CD4-positive, alpha-beta memory T cell (primary cell): ENCODE measurements at regions of chr3 and their contacts with region 1.

Region 1: GRCh38 chr3:138834359-138835212 is at the start of gene PIK3CB:
- DNase-seq: peak; percentile 81 to 89 (median 88)
- H3K4me3 ChIP-seq: peak within 1 kb of the TSS; percentile 64 to 76
- H3K4me3 Mint-ChIP-seq: peak within 1 kb of the TSS; percentile 90 to 98 (median 95)
- H3K27ac ChIP-seq: peak within 1 kb of the TSS; percentile 76
- H3K27ac Mint-ChIP-seq: peak within 1 kb of the TSS; percentile 96 to 99 (median 97)
- H3K4me1 ChIP-seq: peaks cover 21% of the 10 kb centered on the region
- H3K4me1 Mint-ChIP-seq: peaks cover 19 to 37% (median 29%) of the 10 kb centered on the region in 4 donors
- H3K27me3 ChIP-seq: no peaks in the 10 kb centered on the region
- H3K27me3 Mint-ChIP-seq: no peaks in the 10 kb centered on the region
- total RNA-seq, gene PIK3CB: 44.8 to 52.1 TPM

Region 2: DNA sequence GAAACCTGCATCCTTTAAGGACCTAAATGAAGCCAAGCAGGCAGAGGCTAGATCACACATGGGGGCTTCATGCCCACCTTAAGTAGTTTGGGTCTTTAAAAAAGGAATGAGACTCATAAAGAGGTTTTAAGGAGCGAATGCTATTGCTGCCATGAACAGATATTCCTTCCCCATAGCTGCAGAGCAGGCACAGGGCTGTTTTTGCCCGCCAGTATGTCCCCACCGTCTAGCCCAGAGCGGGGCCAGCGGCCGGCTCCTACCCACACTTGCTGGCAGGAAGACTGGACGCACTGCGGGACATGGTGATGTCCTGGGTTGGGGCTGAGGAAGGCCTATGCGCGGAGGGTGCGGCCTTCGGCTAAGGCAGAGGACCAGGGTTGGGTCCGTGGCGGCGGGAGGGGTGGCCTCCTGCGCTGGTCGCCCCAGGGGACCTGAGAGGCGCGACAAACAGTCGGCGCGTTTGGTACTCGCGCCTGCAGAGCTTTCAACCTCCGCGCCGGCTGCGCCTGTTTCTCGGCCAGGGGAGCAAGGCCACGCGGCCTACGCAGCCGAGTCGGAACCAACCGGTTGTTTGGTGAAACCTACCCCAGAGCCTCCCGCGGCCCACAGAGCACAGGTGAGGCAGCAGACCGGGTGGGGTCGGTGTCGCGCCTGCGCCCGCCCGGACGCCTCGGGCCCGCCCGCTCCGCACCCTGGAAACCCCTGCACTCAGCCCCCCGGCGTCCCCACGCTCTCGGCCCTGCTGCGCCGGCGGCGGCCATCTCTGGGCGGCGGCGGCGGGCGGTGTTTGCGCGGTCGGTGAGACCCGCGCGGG is 226.1 kb before region 1 on chr3 and contains the start of gene FAIM:
- CTCF ChIA-PET with region 1: no interaction called
- POLR2A ChIA-PET with region 1: interaction called, 3 read pairs
- intact Hi-C with region 1: loop called (anchors 2 kb)
- DNase-seq: peak; percentile 71 to 84 (median 78)
- H3K4me3 ChIP-seq: peak within 1 kb of the TSS; percentile 45 to 48
- H3K4me3 Mint-ChIP-seq: peak within 1 kb of the TSS; percentile 87 to 99 (median 88)
- H3K27ac ChIP-seq: peak within 1 kb of the TSS; percentile 67
- H3K27ac Mint-ChIP-seq: peak within 1 kb of the TSS; percentile 93 to 100 (median 96)
- H3K4me1 ChIP-seq: peaks cover 13% of the 10 kb centered on the region
- H3K4me1 Mint-ChIP-seq: peaks cover 9 to 23% (median 16%) of the 10 kb centered on the region in 4 donors
- H3K27me3 ChIP-seq: no peaks in the 10 kb centered on the region
- H3K27me3 Mint-ChIP-seq: peaks cover 0 to 5% of the 10 kb centered on the region in 2 donors
- total RNA-seq, gene FAIM: 4.6 to 5.0 TPM

Region 3: GRCh38 chr3:138694287-138695007 is 140.1 kb before region 1 on chr3:
- CTCF ChIA-PET with region 1: no interaction called
- POLR2A ChIA-PET with region 1: no interaction called
- intact Hi-C with region 1: loop called (anchors 10 kb)
- DNase-seq: no peak
- H3K4me3 ChIP-seq: no peak overlapping the region
- H3K4me3 Mint-ChIP-seq: no peak overlapping the region
- H3K27ac ChIP-seq: no peak overlapping the region
- H3K27ac Mint-ChIP-seq: peak overlapping the region in 1 of 7 donors; percentile 41
- H3K4me1 ChIP-seq: no peaks in the 10 kb centered on the region
- H3K4me1 Mint-ChIP-seq: no peaks in the 10 kb centered on the region
- H3K27me3 ChIP-seq: no peaks in the 10 kb centered on the region
- H3K27me3 Mint-ChIP-seq: no peaks in the 10 kb centered on the region

Region 4: DNA sequence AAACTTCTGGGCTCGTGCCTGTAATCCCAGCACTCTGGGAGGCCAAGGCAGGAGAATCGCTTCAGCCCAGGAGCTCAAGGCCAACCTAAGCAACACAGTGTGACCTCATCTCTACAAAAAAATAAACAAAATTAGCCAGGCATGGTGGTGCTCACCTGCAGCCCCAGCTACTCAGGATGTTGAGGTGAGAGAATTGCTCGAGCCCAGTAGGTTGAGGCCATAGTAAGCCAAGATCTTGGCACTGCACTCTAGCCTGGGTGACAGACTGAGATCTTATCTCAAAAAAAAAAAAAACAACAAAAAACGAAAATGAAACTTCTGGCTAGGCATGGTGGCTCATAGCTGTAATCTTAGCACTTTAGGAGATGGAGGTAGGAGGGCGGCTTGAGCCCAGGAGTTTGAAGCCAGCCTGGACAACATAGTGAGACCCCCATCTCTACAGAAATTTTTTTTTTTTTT is 53.5 kb before region 1 on chr3:
- CTCF ChIA-PET with region 1: interaction called, 4 read pairs
- POLR2A ChIA-PET with region 1: interaction called, 19 read pairs
- intact Hi-C with region 1: loop called (anchors 1 kb)
- DNase-seq: peak; percentile 73 to 87 (median 83)
- H3K4me3 ChIP-seq: peak overlapping the region in 1 of 2 donors; percentile 22
- H3K4me3 Mint-ChIP-seq: peak overlapping the region; percentile 46 to 81 (median 70)
- H3K27ac ChIP-seq: peak overlapping the region; percentile 48
- H3K27ac Mint-ChIP-seq: peak overlapping the region; percentile 86 to 94 (median 92)
- H3K4me1 ChIP-seq: peaks cover 22% of the 10 kb centered on the region
- H3K4me1 Mint-ChIP-seq: peaks cover 20 to 46% (median 29%) of the 10 kb centered on the region in 4 donors
- H3K27me3 ChIP-seq: no peaks in the 10 kb centered on the region
- H3K27me3 Mint-ChIP-seq: no peaks in the 10 kb centered on the region

Region 5: GRCh38 chr3:138818185-138818860 is 16.3 kb before region 1 on chr3:
- CTCF ChIA-PET with region 1: no interaction called
- POLR2A ChIA-PET with region 1: interaction called, 4 read pairs
- intact Hi-C with region 1: loop called (anchors 1 kb)
- DNase-seq: no peak
- H3K4me3 ChIP-seq: no peak overlapping the region
- H3K4me3 Mint-ChIP-seq: peak overlapping the region in 2 of 8 donors; percentile 6 to 33
- H3K27ac ChIP-seq: no peak overlapping the region
- H3K27ac Mint-ChIP-seq: peak overlapping the region in 6 of 7 donors; percentile 11 to 75 (median 68)
- H3K4me1 ChIP-seq: peaks cover 40% of the 10 kb centered on the region
- H3K4me1 Mint-ChIP-seq: peaks cover 28 to 50% (median 39%) of the 10 kb centered on the region in 4 donors
- H3K27me3 ChIP-seq: no peaks in the 10 kb centered on the region
- H3K27me3 Mint-ChIP-seq: no peaks in the 10 kb centered on the region

Region 6: DNA sequence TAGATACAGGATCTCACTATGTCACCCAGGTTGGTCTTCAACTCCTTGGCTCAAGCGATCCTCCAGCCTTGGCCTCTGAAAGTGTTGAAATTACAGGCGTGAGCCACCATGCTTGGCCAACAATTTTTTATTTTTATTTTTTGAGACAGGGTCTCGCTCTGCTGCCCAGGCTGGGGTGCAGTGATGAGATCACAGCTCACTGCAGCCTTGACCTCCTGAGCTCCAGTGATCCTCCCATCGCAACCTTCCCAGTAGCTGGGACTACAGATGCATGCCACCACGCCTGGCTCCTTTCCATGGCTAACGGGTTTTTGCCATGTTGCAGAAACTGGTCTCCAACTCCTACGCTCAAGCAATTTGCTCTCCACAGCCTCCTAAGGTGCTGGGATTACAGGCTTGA is 20.4 kb after region 1 on chr3:
- CTCF ChIA-PET with region 1: no interaction called
- POLR2A ChIA-PET with region 1: no interaction called
- intact Hi-C with region 1: no loop called
- DNase-seq: no peak
- H3K4me3 ChIP-seq: no peak overlapping the region
- H3K4me3 Mint-ChIP-seq: no peak overlapping the region
- H3K27ac ChIP-seq: no peak overlapping the region
- H3K27ac Mint-ChIP-seq: no peak overlapping the region
- H3K4me1 ChIP-seq: no peaks in the 10 kb centered on the region
- H3K4me1 Mint-ChIP-seq: no peaks in the 10 kb centered on the region
- H3K27me3 ChIP-seq: no peaks in the 10 kb centered on the region
- H3K27me3 Mint-ChIP-seq: peaks cover 3% of the 10 kb centered on the region in 2 donors